ENCODE measurements at regions of chr5 and their contacts with region 1.

Region 1: GRCh38 chr5:55994574-55995333 is at the start of gene IL6ST:
- ATAC-seq: peak; percentile 84 to 97 (median 96)
- H3K4me3 ChIP-seq: peak within 1 kb of the TSS; percentile 65 to 95 (median 85)
- H3K27ac ChIP-seq: peak within 1 kb of the TSS; percentile 79 to 89
- H3K4me1 ChIP-seq: peaks cover 3 to 25% of the 10 kb centered on the region in 2 donors
- total RNA-seq, gene IL6ST: 27.6 to 333 (median 68.5) TPM

Region 2: GRCh38 chr5:56175488-56175887 is 180.7 kb after region 1 on chr5:
- in situ Hi-C with region 1: loop called in 2 of 9 experiments (anchors 25 kb)
- ATAC-seq: peak in 7 of 8 experiments; percentile 77 to 99 (median 84)
- H3K4me3 ChIP-seq: no peak overlapping the region
- H3K27ac ChIP-seq: no peak overlapping the region
- H3K4me1 ChIP-seq: peaks cover 0 to 8% of the 10 kb centered on the region in 2 donors